ENCODE measurements at regions of chr15 and their contacts with region 1.

Region 1: DNA sequence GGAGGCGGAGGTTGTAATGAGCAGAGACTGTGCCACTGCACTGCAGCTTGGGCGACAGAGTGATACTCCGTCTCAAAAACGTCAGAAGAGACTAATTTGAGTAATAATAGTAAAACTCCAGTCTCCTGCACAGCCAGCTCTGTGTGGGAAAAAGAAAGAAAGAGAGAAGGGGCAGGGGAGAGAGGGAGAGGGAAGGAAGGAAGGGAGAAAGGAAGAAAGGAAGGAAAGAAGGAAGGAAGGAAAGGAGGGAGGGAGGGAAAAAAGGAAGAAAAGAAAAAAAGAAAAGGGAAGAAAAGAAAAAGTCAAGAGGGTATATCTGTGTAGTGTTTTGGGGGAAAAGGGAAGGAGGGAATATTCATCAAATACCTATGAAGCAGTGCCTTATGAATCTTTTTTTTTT is 23.1 kb upstream of the PDIA3 start:
- DNase-seq: no peak
- ATAC-seq: no peak
- H3K4me3 ChIP-seq: no peak overlapping the region
- H3K4me1 ChIP-seq: no peaks in the 10 kb centered on the region
- CTCF ChIP-seq: no peak

Region 2: DNA sequence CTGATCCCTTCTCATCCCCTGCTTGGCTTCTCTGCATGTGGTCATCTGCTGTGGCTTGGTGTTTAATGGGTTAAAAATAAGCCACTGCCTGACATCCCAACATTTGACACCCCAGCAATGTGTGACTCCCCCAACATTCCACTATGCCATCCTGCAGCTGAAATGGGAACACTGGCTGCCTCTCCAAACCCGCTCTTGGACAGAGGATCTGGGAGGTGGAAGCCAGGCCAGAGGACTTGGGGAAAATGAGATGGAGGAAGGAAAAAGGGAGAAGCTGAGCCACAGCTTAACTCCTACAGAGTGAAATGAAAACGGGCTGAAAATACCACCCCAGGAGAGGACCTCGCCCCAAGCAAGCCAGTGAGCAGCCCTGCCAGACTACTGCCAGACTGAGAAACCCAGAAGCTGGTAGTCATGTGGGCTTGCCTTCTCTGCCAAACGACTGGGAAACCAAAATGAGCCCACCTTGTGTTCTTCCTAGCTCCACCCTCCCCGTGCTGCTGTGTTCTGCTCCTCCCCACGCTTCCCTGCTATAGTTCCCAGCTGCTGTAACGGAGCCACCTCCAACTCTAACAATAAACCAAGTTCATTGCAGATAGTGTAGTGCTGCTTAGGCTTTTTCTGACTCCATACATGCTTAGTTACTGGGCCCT is 192.0 kb before region 1 on chr15:
- intact Hi-C with region 1: loop called in 1 of 2 experiments (anchors 10 kb)
- DNase-seq: no peak
- ATAC-seq: peak; percentile 36
- H3K4me3 ChIP-seq: no peak overlapping the region
- H3K4me1 ChIP-seq: peaks cover 5% of the 10 kb centered on the region
- CTCF ChIP-seq: no peak

Region 3: DNA sequence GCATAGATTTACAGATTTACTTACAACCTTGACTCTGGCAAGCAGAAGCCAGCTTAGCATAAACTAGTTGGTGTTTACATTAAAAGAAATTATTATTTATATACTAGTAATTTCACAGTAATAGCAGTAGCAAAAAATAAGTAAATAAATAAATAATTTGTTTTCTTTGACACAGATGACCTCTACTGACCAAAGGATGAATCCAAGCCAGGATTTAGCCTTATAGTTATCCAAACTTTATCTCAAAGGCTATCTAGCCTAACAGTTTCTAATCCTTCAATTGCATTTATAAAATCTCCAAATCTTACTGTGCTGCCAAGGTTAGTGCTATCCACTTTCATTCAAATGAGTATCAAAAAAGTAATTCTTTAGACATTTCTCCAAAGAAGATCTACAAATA is 407.6 kb after region 1 on chr15:
- intact Hi-C with region 1: no loop called
- DNase-seq: no peak
- ATAC-seq: no peak
- H3K4me3 ChIP-seq: no peak overlapping the region
- H3K4me1 ChIP-seq: no peaks in the 10 kb centered on the region
- CTCF ChIP-seq: no peak